ENCODE measurements at regions of chrX and their contacts with region 1.

Region 1: DNA sequence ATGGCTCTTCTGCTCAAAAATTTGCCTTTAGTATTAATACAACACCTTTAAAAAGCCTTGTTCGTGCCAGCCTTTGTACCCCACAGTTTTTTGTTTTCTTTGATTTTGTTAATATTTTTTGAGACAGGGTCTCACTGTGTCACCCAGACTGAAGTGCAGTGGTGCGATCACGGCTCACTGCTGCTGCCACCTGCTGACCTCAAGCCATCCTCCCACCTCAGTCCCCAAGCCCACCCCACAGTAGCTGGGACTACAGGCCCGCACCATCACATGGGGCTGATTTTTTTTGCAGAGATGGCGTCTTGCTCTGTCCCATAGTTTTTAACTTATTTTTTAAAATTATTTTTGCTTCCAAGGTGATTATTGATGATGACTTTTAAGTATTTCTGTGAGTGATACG is 134.0 kb downstream of the HTR2C start:
- DNase-seq: no peak
- ATAC-seq: no peak
- H3K4me3 Mint-ChIP-seq: no peak overlapping the region
- H3K27ac Mint-ChIP-seq: no peak overlapping the region
- H3K4me1 Mint-ChIP-seq: no peaks in the 10 kb centered on the region
- H3K27me3 Mint-ChIP-seq: no peaks in the 10 kb centered on the region
- CTCF ChIP-seq: no peak

Region 2: DNA sequence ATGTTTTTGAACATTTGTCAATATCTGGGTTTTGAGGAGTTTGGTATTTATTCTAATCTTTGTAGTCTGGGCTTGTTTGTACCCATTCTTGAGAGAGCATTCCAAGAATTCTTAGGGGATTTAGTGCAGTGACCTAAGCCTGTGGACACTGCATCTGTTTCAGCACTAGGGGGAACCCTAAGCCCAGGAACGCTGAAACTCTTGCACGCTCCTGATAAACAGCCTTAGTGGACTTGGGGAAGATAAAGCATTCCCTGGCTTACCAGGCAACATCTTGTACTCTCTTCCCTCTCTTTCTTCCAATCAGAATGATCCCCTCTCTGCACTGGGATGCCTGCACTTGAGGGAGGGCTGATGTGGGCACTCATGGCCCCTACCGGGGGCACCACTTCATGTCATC is 788.9 kb before region 1 on chrX:
- CTCF ChIA-PET with region 1: no interaction called
- POLR2A ChIA-PET with region 1: no interaction called
- intact Hi-C with region 1: loop called (anchors 5 kb)
- DNase-seq: no peak
- ATAC-seq: no peak
- H3K4me3 Mint-ChIP-seq: no peak overlapping the region
- H3K27ac Mint-ChIP-seq: no peak overlapping the region
- H3K4me1 Mint-ChIP-seq: no peaks in the 10 kb centered on the region
- H3K27me3 Mint-ChIP-seq: no peaks in the 10 kb centered on the region
- CTCF ChIP-seq: no peak

Region 3: DNA sequence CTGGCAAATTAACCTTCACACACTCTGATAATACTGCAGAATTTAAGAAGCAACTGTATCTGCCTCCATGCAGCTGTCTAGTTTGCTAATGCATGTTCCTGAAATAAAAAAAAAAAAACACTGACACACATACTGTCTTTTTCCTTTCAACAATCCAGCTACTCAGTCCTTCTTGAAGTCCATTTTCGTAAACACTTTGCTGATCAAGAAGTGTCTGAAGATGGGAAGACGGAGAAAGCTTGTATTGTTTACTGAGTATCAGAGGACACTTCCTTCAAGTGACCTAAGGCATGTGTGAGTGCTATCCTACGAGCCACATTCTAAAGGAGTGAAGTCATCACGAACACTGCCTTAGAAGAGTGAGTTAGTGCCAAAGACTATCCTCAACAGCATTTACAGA is 654.2 kb after region 1 on chrX:
- CTCF ChIA-PET with region 1: no interaction called
- POLR2A ChIA-PET with region 1: no interaction called
- intact Hi-C with region 1: no loop called
- DNase-seq: no peak
- ATAC-seq: no peak
- H3K4me3 Mint-ChIP-seq: no peak overlapping the region
- H3K27ac Mint-ChIP-seq: no peak overlapping the region
- H3K4me1 Mint-ChIP-seq: no peaks in the 10 kb centered on the region
- H3K27me3 Mint-ChIP-seq: no peaks in the 10 kb centered on the region
- CTCF ChIP-seq: no peak

Measured in activated B cell treated with CpG ODN at 0.5 μM for 24 hours (primary cell).